Pancreas (tissue), 10 donors: ENCODE measurements at regions of chr2 and their contacts with region 1.

Region 1: GRCh38 chr2:58448065-58448507 is 207.0 kb upstream of the FANCL start:
- DNase-seq: peak in 3 of 6 donors; percentile 39 to 56 (median 42)
- ATAC-seq: peak; percentile 46 to 92 (median 84)
- H3K4me3 ChIP-seq: no peak overlapping the region
- H3K27ac ChIP-seq: no peak overlapping the region
- H3K4me1 ChIP-seq: peaks cover 0 to 8% (median 0%) of the 10 kb centered on the region in 3 donors
- H3K27me3 ChIP-seq: no peaks in the 10 kb centered on the region
- CTCF ChIP-seq: peak in 1 of 4 donors; percentile 14

Region 2: GRCh38 chr2:57759822-57760300 is 688.2 kb before region 1 on chr2:
- intact Hi-C with region 1: loop called in 1 of 3 experiments (anchors 10 kb)
- DNase-seq: peak; percentile 72 to 95 (median 88)
- ATAC-seq: peak; percentile 98 to 100 (median 100)
- H3K4me3 ChIP-seq: peak overlapping the region in 3 of 4 donors; percentile 11 to 39 (median 37)
- H3K27ac ChIP-seq: no peak overlapping the region
- H3K4me1 ChIP-seq: peaks cover 5 to 12% (median 8%) of the 10 kb centered on the region in 3 donors
- H3K27me3 ChIP-seq: no peaks in the 10 kb centered on the region
- CTCF ChIP-seq: peak; percentile 94 to 98 (median 96)

Region 3: GRCh38 chr2:58271826-58272225 is 176.3 kb before region 1 on chr2:
- intact Hi-C with region 1: no loop called
- DNase-seq: no peak
- ATAC-seq: no peak
- H3K4me3 ChIP-seq: no peak overlapping the region
- H3K27ac ChIP-seq: no peak overlapping the region
- H3K4me1 ChIP-seq: no peaks in the 10 kb centered on the region
- H3K27me3 ChIP-seq: no peaks in the 10 kb centered on the region
- CTCF ChIP-seq: no peak

Region 4: GRCh38 chr2:58484201-58484600 is 36.1 kb after region 1 on chr2:
- intact Hi-C with region 1: no loop called
- DNase-seq: no peak
- ATAC-seq: no peak
- H3K4me3 ChIP-seq: no peak overlapping the region
- H3K27ac ChIP-seq: no peak overlapping the region
- H3K4me1 ChIP-seq: no peaks in the 10 kb centered on the region
- H3K27me3 ChIP-seq: no peaks in the 10 kb centered on the region
- CTCF ChIP-seq: no peak